Mammary epithelial cell (primary cell): ENCODE measurements at regions of chr15 and their contacts with region 1.

Region 1: GRCh38 chr15:87267798-87268197 is 988.7 kb downstream of the NTRK3 start:
- DNase-seq: peak; percentile 94
- H3K4me3 ChIP-seq: no peak overlapping the region
- H3K27ac ChIP-seq: peak overlapping the region; percentile 94
- H3K4me1 ChIP-seq: peaks cover 30% of the 10 kb centered on the region
- H3K27me3 ChIP-seq: no peaks in the 10 kb centered on the region
- CTCF ChIP-seq: no peak

Region 2: DNA sequence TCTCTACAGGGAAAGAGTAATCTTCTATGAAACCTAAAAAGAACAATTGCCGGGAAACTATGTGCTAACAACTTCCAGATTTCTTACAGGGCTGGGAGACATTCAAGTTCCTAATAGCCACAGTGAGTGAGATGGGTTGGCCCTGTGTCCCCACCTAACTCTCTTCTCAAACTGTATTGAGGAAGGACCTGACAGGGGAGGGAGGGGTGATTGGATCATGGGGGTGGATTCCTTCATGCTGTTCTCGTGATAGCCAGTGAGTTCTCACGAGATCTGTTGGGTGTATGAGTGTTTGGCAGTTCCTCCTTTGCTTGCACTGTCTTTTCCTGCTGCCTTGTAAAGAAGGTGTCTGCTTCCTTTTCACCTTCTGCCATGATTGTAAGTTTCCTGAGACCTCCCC is 229.4 kb before region 1 on chr15:
- CTCF ChIA-PET with region 1: no interaction called
- dilution Hi-C with region 1: no loop called
- in situ Hi-C with region 1: no loop called
- intact Hi-C with region 1: loop called (anchors 2 kb)
- DNase-seq: no peak
- H3K4me3 ChIP-seq: no peak overlapping the region
- H3K27ac ChIP-seq: no peak overlapping the region
- H3K4me1 ChIP-seq: peaks cover 6% of the 10 kb centered on the region
- H3K27me3 ChIP-seq: no peaks in the 10 kb centered on the region
- CTCF ChIP-seq: no peak

Region 3: GRCh38 chr15:87207945-87208546 is 59.8 kb before region 1 on chr15:
- CTCF ChIA-PET with region 1: no interaction called
- dilution Hi-C with region 1: no loop called
- in situ Hi-C with region 1: no loop called
- intact Hi-C with region 1: loop called (anchors 1 kb)
- DNase-seq: peak; percentile 88
- H3K4me3 ChIP-seq: no peak overlapping the region
- H3K27ac ChIP-seq: peak overlapping the region; percentile 97
- H3K4me1 ChIP-seq: peaks cover 39% of the 10 kb centered on the region
- H3K27me3 ChIP-seq: no peaks in the 10 kb centered on the region
- CTCF ChIP-seq: no peak

Region 4: DNA sequence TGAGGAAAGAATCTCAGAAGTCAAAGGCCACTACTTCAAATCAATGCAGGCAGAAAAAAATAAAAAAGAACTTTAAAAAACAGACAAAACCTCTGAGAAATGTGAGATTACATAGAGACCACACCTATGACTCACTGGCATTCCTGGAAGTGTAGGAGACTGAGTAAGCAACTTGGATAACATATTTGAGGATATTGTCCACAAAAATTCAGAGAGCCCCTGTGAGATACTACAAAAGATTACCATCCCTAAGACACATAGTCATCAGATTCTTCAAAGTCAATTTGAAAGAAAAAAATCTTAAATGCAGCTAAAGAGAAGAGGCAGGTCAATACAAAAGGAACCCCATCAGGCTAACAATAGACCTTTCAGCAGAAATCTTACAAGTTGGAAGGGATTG is 101.5 kb after region 1 on chr15:
- CTCF ChIA-PET with region 1: no interaction called
- dilution Hi-C with region 1: no loop called
- in situ Hi-C with region 1: no loop called
- intact Hi-C with region 1: loop called (anchors 5 kb)
- DNase-seq: peak; percentile 76
- H3K4me3 ChIP-seq: no peak overlapping the region
- H3K27ac ChIP-seq: peak overlapping the region; percentile 89
- H3K4me1 ChIP-seq: peaks cover 40% of the 10 kb centered on the region
- H3K27me3 ChIP-seq: no peaks in the 10 kb centered on the region
- CTCF ChIP-seq: no peak